Adrenal gland (tissue), 19 donors: ENCODE measurements at regions of chr4 and their contacts with region 1.

Region 1: GRCh38 chr4:67699628-67700027 is 1.3 kb downstream of the UBA6 start:
- DNase-seq: no peak
- H3K4me3 ChIP-seq: peak overlapping the region in 1 of 4 donors; percentile 84
- H3K27ac ChIP-seq: no peak overlapping the region
- H3K4me1 ChIP-seq: peaks cover 7 to 22% of the 10 kb centered on the region in 2 donors
- H3K27me3 ChIP-seq: no peaks in the 10 kb centered on the region
- CTCF ChIP-seq: no peak
- POLR2A ChIP-seq: no peak

Region 2: DNA sequence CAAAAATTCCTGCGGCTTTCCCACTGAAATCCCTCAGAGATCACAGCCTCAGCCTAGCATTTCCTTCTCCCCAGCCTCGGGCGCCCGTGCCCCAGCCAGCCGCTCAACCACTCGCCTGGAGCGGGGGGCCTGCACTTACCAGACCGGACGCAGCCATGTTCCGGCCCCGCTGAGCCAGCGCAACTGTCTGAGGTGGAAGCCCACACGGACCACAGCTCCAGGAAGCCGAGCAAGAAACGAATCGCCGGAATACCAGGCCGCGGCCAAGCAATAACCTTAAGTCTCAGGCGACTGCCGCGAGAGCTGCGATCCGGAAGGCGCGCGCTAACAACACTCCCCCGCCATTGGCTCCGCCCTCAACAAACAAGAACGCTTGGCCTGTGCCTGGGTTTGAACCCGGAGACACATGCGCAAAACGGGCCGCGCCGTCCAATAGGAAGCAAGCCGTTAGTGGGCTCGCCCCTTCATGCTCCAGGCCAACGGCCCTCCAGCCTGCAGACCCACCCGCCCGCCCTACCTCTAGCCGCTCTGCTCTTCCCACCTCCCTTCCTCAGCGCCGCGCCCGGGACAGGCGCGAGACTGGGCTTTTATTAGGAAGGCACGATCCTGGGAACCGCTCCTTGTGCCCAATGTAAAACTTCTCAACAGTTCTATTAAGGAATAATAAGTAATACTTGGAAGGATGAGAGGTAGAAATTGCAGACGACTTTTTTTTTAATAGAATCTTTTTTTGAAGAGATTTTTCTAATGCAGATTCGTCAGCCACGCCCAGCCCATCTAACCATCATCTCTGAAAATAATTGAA is 154.2 kb before region 1 on chr4 and contains the start of gene CENPC:
- intact Hi-C with region 1: loop called in 1 of 2 experiments (anchors 10 kb)
- DNase-seq: peak; percentile 95 to 99 (median 98)
- H3K4me3 ChIP-seq: peak within 1 kb of the TSS; percentile 28 to 98 (median 82)
- H3K27ac ChIP-seq: peak within 1 kb of the TSS; percentile 91 to 95 (median 92)
- H3K4me1 ChIP-seq: peaks cover 0 to 24% of the 10 kb centered on the region in 2 donors
- H3K27me3 ChIP-seq: no peaks in the 10 kb centered on the region
- CTCF ChIP-seq: no peak
- POLR2A ChIP-seq: peak; percentile 91 to 96
- total RNA-seq, gene CENPC: 8.0 to 31.1 (median 19.9) TPM